Activated CD4-positive, alpha-beta memory T cell treated with anti-CD3 and anti-CD28 coated beads for 36 hours (primary cell): ENCODE measurements at regions of chr12 and their contacts with region 1.

Region 1: DNA sequence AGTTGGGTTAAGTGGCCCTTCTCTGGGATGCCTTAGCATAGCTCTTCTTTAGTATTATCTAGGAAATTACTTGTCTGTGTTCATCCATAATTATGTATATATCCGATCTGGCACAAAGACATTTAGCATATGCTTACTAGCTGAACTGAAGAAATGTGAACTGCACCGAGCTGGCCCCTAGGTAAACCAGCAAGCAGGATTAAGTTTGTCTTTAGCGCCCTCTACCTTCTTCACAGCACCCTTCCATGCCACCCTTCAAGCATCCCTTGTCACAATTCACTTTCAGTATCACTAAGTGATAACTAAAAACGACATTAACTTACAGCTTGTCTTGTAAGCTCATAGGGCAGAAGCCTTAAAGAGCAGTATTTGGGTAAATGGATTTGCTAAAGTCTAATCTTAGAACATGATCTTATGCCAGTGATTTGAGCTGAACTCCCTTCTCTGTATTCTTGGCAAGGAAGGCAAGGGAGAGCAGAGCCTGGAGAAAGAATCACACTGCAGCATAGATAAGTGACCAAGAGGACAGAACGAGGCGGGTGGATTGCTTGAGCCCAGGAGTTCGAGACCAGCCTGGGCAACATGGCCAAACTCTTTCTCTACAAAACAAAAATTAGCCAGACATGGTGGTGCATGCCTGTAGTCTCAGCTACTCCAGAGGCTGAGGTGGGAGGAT is 2.6 kb upstream of the HAL start:
- DNase-seq: peak; percentile 65
- H3K4me3 Mint-ChIP-seq: no peak overlapping the region
- H3K27ac Mint-ChIP-seq: no peak overlapping the region
- H3K4me1 Mint-ChIP-seq: peaks cover 9% of the 10 kb centered on the region
- H3K27me3 Mint-ChIP-seq: no peaks in the 10 kb centered on the region

Region 2: DNA sequence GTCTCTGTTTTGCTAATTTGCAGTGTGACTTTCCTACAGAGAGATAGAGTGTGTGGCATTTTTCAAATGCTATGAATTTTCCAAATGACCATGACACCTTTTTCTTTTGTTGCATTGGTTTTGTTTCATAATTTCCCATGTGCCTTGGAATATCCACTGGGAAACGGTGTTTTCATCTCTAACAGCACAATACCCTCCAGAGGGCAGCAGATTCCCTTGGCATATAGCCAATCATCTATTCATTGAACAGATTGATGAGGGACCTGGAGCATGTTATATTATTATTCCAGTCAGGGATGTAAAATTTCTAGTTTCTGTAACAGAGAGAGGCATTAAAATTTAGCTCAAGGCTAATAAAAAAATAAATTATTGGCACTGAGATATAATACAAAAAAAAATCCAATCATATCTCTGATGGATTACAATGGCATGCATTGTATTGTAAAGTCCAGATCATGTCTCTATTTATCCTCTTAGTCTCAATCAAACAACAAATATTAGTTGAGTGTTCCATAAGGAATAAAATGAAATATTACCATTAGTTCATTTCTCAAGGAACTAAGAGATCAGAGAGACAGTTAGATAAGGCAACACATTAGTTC is 178.5 kb before region 1 on chr12:
- CTCF ChIA-PET with region 1: interaction called, 3 read pairs
- POLR2A ChIA-PET with region 1: no interaction called
- intact Hi-C with region 1: loop called (anchors 1 kb)
- DNase-seq: no peak
- H3K4me3 Mint-ChIP-seq: no peak overlapping the region
- H3K27ac Mint-ChIP-seq: no peak overlapping the region
- H3K4me1 Mint-ChIP-seq: no peaks in the 10 kb centered on the region
- H3K27me3 Mint-ChIP-seq: peaks cover 15% of the 10 kb centered on the region

Region 3: DNA sequence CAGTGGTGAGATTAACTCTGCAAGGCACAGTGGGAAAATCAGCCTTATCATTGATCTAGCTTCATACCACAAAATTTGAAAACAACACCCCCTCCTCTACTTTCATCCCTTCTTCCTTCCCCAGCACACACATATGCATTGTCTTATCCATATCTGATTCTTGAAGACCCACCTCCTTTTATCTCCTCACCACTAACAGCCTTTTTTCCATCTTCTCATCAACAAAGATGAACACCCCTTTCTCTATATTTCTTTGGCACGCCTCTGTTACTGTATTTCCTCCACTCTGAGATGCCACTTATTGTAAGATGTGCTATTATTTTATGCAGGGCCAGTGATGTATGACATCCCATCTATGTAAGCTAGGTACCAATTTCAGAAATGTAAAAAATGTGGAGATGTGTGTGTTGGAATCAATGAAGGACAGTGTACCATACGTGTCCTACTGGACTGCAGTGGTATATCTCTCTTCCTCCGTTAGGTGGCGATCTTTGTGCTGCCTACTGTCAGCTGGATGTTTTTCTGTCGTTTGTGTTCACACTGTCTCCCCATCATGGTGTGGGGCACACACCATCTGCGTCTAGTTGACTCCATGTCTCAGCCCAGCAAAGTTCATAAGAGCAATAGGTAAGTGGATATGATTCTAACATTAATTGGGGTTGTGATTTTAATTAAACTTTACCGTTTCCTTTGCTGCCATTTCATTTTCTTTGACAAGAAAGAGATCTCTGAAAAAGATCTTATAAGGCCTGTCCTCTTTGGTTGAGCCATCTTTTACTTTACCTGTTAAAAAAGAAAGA is 80.4 kb before region 1 on chr12:
- CTCF ChIA-PET with region 1: interaction called, 84 read pairs
- POLR2A ChIA-PET with region 1: interaction called, 3 read pairs
- intact Hi-C with region 1: loop called (anchors 1 kb)
- DNase-seq: peak; percentile 58
- H3K4me3 Mint-ChIP-seq: no peak overlapping the region
- H3K27ac Mint-ChIP-seq: no peak overlapping the region
- H3K4me1 Mint-ChIP-seq: no peaks in the 10 kb centered on the region
- H3K27me3 Mint-ChIP-seq: peaks cover 2% of the 10 kb centered on the region

Region 4: GRCh38 chr12:96015672-96016071 is 16.9 kb after region 1 on chr12:
- CTCF ChIA-PET with region 1: interaction called, 10 read pairs
- POLR2A ChIA-PET with region 1: no interaction called
- intact Hi-C with region 1: no loop called
- DNase-seq: no peak
- H3K4me3 Mint-ChIP-seq: no peak overlapping the region
- H3K27ac Mint-ChIP-seq: no peak overlapping the region
- H3K4me1 Mint-ChIP-seq: no peaks in the 10 kb centered on the region
- H3K27me3 Mint-ChIP-seq: no peaks in the 10 kb centered on the region